Activated CD8-positive, alpha-beta memory T cell treated with anti-CD3 and anti-CD28 coated beads, Interleukin-2, amount 10 ng/mL, durations not matched to agents 7 days and 5 days (primary cell): ENCODE measurements at regions of chr9 and their contacts with region 1.

Region 1: DNA sequence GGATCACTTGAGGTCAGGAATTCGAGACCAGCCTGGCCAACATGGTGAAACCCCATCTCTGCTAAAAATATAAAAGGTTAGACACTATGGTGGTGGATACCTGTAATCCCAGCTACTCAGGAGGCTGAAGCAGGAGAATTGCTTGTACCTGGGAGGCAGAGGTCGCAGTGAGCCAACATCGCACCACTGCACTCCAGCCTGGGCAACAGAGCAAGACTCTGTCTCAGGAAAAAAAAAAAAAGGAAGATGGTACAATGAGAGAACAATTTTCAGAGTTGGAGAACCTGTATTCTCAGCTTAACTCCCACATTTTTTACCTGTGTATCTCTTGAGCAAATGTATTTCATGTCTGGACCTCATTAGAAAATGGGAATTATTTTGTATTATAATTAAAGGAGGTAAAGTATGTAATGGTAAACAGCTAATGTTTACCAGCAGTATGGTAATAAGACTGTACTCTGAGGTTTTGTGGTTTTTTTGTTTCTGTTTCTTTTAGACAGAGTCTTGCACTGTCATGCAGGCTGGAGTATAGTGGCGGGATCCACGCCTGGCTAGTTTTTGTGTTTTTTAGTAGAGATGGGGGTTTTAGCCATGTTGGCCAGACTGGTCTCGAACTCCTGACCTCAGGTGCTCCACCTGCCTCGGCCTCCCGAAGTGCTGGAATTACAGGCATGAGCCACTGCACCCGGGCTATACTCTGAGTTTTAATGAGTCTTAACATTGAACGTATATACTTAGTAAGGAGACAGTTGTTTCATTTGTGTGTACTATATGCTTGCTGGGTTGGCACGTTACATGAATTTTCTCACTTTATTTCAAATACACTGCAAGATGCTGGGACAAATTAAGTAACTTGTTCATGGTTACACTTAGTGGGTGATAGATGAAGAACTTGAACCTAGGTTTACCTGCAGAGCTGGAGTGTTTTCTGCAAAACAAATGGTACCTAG is 16.2 kb downstream of the UHRF2 start:
- DNase-seq: peak; percentile 63
- ATAC-seq: peak; percentile 94
- H3K4me3 Mint-ChIP-seq: peak overlapping the region; percentile 63
- H3K27ac Mint-ChIP-seq: peak overlapping the region; percentile 88
- H3K4me1 Mint-ChIP-seq: peaks cover 77% of the 10 kb centered on the region
- H3K27me3 Mint-ChIP-seq: no peaks in the 10 kb centered on the region

Region 2: DNA sequence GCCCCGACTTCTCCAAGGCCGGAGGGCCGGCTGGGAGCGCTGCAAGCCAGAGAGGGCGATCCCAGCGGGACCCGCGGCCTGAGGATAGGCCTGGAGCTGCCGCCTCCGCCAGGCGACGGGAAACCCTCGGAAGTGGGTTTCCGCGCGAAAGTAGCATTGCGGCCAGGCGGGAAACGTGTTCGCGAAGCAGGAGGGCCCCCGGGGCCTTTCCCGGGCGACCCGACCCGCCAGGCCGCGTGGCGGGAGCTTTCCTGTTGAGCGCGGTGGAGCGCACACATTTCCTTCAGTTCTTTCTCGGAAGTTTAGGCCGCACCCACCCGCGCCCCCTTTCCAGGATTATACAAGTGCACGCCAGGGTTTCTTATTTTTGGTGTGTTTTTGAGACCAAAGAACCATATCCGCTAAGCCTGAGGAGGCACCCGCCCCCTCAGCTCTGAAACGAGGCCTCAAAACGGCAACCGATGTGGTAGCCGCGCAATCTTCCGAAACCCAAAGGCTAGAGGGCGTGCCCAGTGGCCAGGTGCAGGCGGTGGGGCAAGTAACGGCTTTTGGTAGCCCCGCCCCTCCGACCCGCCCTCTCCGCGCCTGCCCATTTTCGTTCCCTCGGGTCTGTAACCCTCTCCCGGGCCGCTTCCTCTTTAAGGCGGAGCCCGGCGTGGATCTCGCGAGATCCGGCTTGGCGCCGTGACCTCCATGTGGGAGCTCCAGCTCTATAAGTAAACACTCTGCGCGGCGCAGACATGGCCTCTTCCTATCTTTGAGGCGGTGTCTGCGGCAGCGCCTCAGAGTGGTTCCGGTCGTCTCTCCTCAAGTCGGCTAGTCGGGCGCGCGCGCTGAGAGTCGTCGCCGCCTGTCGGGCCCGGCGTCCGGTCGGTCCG is 16.5 kb before region 1 on chr9 and contains the start of gene UHRF2:
- CTCF ChIA-PET with region 1: interaction called, 41 read pairs
- DNase-seq: peak; percentile 100
- ATAC-seq: peak; percentile 88
- H3K4me3 Mint-ChIP-seq: peak within 1 kb of the TSS; percentile 87
- H3K27ac Mint-ChIP-seq: peak within 1 kb of the TSS; percentile 95
- H3K4me1 Mint-ChIP-seq: peaks cover 33% of the 10 kb centered on the region
- H3K27me3 Mint-ChIP-seq: peaks cover 6% of the 10 kb centered on the region
- total RNA-seq, gene UHRF2: 68.0 to 86.4 TPM